ENCODE measurements at regions of chr9 and their contacts with region 1.

Region 1: GRCh38 chr9:14652729-14653377 is 40.4 kb downstream of the ZDHHC21 start:
- DNase-seq: peak; percentile 37
- ATAC-seq: peak; percentile 49; the same call in 1 of the 2 replicates
- H3K4me3 ChIP-seq: no peak overlapping the region
- H3K27ac ChIP-seq: no peak overlapping the region
- H3K4me1 ChIP-seq: no peaks in the 10 kb centered on the region
- H3K27me3 ChIP-seq: no peaks in the 10 kb centered on the region
- CTCF ChIP-seq: peak; percentile 70

Region 2: DNA sequence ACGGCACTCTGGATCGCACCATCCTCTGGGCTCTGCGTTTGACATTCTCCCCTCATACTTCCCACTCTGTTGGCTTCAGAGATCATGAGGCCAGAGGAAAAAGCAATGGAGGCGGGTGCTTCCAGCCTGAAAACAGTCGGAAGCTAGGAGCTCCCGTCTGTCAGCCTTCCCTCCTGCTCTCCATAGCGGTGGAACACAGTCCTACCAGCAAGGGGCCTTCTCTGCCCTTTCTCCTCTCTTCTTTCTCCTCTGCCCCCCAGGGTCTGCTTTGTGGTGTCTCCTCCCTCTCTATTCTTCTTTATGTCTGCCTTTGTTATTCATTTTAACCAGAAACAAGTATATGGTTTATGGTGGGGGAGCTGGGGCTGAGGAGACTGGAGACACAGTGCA is 186.4 kb before region 1 on chr9:
- CTCF ChIA-PET with region 1: interaction called, 3 read pairs
- POLR2A ChIA-PET with region 1: no interaction called
- intact Hi-C with region 1: loop called (anchors 2 kb)
- DNase-seq: no peak
- ATAC-seq: no peak
- H3K4me3 ChIP-seq: no peak overlapping the region
- H3K27ac ChIP-seq: no peak overlapping the region
- H3K4me1 ChIP-seq: no peaks in the 10 kb centered on the region
- H3K27me3 ChIP-seq: no peaks in the 10 kb centered on the region
- CTCF ChIP-seq: no peak

Region 3: DNA sequence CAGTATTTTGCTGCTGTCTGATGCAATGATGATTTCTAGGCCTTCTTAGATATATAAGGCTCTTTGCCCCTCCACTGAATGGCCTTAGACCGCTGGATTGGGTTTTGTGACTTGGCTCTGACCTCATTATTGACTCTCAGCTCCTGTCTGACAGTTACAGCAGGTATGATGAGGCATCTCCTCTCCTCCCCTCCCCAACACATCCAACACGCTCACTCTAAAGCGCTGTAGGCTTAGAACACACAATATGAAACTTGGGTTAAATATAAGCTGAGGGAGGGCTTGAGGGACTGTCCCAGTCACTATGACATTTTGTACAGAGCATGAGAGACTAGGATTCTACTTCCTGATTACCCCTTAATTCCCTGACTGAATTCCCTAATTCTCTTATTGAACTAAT is 88.5 kb after region 1 on chr9:
- CTCF ChIA-PET with region 1: no interaction called
- POLR2A ChIA-PET with region 1: no interaction called
- intact Hi-C with region 1: no loop called
- DNase-seq: no peak
- ATAC-seq: no peak
- H3K4me3 ChIP-seq: no peak overlapping the region
- H3K27ac ChIP-seq: no peak overlapping the region
- H3K4me1 ChIP-seq: no peaks in the 10 kb centered on the region
- H3K27me3 ChIP-seq: no peaks in the 10 kb centered on the region
- CTCF ChIP-seq: no peak

Region 4: GRCh38 chr9:14978022-14979000 is 325.5 kb after region 1 on chr9:
- CTCF ChIA-PET with region 1: no interaction called
- POLR2A ChIA-PET with region 1: no interaction called
- intact Hi-C with region 1: no loop called
- DNase-seq: no peak
- ATAC-seq: no peak
- H3K4me3 ChIP-seq: no peak overlapping the region
- H3K27ac ChIP-seq: no peak overlapping the region
- H3K4me1 ChIP-seq: peaks cover 2% of the 10 kb centered on the region; the same call in 1 of the 2 replicates
- H3K27me3 ChIP-seq: no peaks in the 10 kb centered on the region
- CTCF ChIP-seq: no peak